Caco-2 (cell line): ENCODE measurements at regions of chr14 and their contacts with region 1.

Region 1: DNA sequence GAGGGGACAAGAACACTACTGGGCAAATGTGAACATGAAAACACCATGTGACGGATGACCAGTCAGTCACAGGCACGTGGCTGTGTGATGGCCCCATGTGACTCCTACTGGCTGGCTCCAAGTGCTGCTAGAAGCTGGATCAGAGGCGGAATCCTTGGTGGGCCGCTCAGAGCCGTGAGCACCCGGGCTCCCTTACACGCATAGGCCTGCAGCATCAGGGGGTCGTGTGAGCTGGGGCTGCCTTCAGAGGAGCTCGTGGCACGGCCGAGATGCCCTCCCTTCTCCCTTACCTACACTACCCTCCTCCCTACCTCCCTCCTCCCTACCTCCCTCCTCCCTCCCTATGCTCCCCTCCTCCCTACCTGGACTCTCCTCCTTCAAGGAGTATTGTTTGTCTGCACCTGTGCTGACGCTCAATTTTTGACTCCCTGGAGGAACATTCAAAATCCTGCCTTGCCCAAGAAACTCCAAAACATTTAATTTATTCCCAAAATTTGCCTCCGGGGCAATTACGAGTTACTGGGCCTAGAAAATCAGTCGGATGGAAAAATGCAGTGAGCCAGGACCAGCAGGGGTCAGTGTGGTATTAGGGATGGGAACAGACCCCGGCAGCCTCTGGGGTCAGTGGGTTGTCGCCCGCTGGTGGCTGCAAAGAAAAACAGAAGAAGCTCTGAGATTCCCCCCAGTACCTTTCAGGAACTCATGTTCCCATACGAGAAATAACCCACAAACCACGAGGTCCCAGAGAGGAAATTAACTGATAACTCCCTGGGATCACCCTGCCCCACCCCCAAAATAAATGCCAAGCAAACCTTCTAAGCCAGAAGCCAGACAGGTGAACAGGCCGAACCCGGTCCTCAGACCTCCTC is 61.2 kb downstream of the C14orf132 start:
- DNase-seq: peak; percentile 82 to 90
- H3K4me3 ChIP-seq: no peak overlapping the region
- H3K4me3 Mint-ChIP-seq: no peak overlapping the region
- H3K27ac Mint-ChIP-seq: no peak overlapping the region
- H3K4me1 ChIP-seq: peaks cover 43% of the 10 kb centered on the region
- H3K4me1 Mint-ChIP-seq: peaks cover 8% of the 10 kb centered on the region
- H3K27me3 ChIP-seq: no peaks in the 10 kb centered on the region
- H3K27me3 Mint-ChIP-seq: no peaks in the 10 kb centered on the region
- CTCF ChIP-seq: peak; percentile 95 to 96

Region 2: DNA sequence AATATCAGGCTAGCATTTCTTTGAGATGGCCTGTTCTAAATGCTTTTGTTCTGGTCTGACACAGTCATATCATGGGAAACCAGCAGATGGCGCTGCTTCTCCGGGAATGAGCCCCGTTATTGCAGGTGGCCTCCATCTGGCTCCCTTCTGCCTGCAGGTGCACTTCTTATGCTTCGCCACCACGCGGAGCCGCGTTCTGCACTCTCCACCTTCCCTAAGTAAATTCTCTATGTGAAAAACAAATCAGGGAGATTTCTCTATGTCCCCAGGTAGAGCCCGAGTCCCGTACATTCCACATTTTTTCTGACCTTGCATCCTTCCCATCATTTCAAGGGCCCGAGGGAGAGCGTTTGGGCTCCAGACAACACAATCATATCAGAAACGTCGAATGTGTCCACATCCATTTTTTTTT is 539.4 kb before region 1 on chr14:
- CTCF ChIA-PET with region 1: no interaction called
- POLR2A ChIA-PET with region 1: no interaction called
- intact Hi-C with region 1: loop called (anchors 1 kb)
- DNase-seq: peak; percentile 86 to 91
- H3K4me3 ChIP-seq: no peak overlapping the region
- H3K4me3 Mint-ChIP-seq: no peak overlapping the region
- H3K27ac Mint-ChIP-seq: no peak overlapping the region
- H3K4me1 ChIP-seq: no peaks in the 10 kb centered on the region
- H3K4me1 Mint-ChIP-seq: no peaks in the 10 kb centered on the region
- H3K27me3 ChIP-seq: no peaks in the 10 kb centered on the region
- H3K27me3 Mint-ChIP-seq: no peaks in the 10 kb centered on the region
- CTCF ChIP-seq: peak; percentile 95 to 97

Region 3: DNA sequence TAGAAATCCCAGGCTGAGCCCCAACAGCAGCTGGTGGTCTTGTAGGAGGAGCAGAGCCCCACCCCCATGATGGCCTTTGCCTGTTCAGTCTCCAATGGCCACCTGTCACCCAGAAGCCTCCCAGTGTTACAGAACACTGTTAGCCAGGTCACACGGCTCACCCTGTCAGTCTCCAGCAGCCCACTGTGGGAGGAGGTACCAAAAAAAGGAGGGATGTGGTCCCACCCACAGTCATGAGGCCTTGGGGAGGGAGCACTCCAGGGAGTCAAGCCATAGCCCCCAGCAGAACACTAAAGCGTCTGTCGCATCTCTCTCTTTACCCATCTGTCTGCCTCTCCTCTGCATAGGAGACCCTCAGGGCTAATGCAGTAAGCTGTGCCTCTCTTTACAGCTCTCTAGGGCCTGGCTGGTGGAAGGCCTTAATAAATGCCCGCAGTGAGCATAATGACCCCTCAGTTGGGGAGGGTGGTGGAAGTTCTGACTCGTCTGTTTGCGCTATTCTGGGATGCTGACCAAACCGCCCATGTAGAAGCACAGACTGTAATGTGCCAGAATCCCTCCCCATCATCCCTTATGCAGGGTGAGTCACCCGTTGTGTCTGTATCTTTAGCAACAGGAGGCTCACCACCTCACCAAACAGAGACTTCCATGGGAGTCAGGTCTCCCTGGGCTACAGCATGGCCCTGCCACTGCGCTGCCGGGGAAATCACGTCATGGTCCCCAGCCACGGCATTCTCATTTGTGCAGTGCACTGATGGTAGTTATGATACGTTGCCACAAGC is 46.6 kb before region 1 on chr14:
- CTCF ChIA-PET with region 1: interaction called, 26 read pairs
- POLR2A ChIA-PET with region 1: no interaction called
- intact Hi-C with region 1: loop called (anchors 1 kb)
- DNase-seq: no peak
- H3K4me3 ChIP-seq: no peak overlapping the region
- H3K4me3 Mint-ChIP-seq: no peak overlapping the region
- H3K27ac Mint-ChIP-seq: no peak overlapping the region
- H3K4me1 ChIP-seq: no peaks in the 10 kb centered on the region
- H3K4me1 Mint-ChIP-seq: no peaks in the 10 kb centered on the region
- H3K27me3 ChIP-seq: no peaks in the 10 kb centered on the region
- H3K27me3 Mint-ChIP-seq: peaks cover 10% of the 10 kb centered on the region
- CTCF ChIP-seq: no peak

Region 4: GRCh38 chr14:96204151-96205058 is 104.0 kb after region 1 on chr14 and contains the start of gene BDKRB2:
- CTCF ChIA-PET with region 1: interaction called, 8 read pairs
- POLR2A ChIA-PET with region 1: interaction called, 5 read pairs
- intact Hi-C with region 1: loop called (anchors 2 kb)
- DNase-seq: peak; percentile 70 to 73
- H3K4me3 ChIP-seq: peak within 1 kb of the TSS; percentile 35
- H3K4me3 Mint-ChIP-seq: peak within 1 kb of the TSS; percentile 70
- H3K27ac Mint-ChIP-seq: peak within 1 kb of the TSS; percentile 72
- H3K4me1 ChIP-seq: peaks cover 14% of the 10 kb centered on the region
- H3K4me1 Mint-ChIP-seq: no peaks in the 10 kb centered on the region
- H3K27me3 ChIP-seq: no peaks in the 10 kb centered on the region
- H3K27me3 Mint-ChIP-seq: no peaks in the 10 kb centered on the region
- CTCF ChIP-seq: no peak
- total RNA-seq, gene BDKRB2: 1.4 and 2.0 TPM in 2 replicates

Region 5: DNA sequence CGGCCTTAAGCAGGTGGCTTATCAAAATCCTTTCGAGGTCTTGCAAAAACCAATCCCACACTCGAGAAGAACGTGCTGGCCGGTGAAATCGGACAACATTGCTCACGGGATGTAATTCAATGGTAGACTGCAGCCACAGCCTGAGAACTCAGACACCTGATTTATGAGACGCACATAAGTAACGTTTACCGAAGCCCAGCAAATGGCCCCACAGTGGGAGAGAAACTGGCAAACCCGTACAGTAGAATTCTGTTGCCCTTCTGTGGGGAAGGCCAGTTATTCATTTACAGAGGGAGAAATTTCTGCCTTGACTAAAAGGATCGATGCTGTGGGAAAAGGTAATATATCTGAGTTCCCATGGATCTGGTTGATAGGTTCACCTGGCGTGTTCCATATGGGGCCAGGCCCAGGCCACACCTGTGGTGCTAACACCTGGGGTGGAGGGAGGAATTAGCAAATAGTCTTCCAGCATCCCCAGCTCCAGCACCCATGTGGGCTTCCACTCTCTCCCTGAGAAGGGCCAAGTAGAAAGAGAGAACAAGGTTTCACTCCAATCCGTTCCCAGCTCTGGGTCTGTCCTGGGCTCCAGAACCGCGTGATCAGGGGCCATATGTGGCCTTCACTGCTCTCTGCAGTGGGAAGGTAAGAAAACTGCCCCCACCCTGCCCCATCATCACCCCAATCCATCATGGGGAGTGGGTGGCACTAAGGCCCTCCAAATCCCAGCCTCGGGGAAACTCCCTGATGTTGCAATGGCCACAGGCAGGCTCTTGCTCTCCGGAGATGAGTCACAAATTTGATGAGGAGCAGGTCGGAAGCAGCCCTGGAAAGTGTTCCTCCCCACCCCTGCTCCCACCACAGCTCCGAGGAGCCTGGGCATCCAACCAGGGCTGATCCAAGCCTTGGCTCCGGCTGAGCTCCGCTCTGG is 168.3 kb after region 1 on chr14:
- CTCF ChIA-PET with region 1: interaction called, 60 read pairs
- POLR2A ChIA-PET with region 1: no interaction called
- intact Hi-C with region 1: loop called (anchors 1 kb)
- DNase-seq: no peak
- H3K4me3 ChIP-seq: no peak overlapping the region
- H3K4me3 Mint-ChIP-seq: no peak overlapping the region
- H3K27ac Mint-ChIP-seq: no peak overlapping the region
- H3K4me1 ChIP-seq: 0 out of 2 replicates have a peak, but pooled peaks cover 7% of the 10 kb centered on the region
- H3K4me1 Mint-ChIP-seq: peaks cover 10% of the 10 kb centered on the region
- H3K27me3 ChIP-seq: no peaks in the 10 kb centered on the region
- H3K27me3 Mint-ChIP-seq: no peaks in the 10 kb centered on the region
- CTCF ChIP-seq: no peak

Region 6: GRCh38 chr14:96424109-96424989 is 324.0 kb after region 1 on chr14:
- CTCF ChIA-PET with region 1: no interaction called
- POLR2A ChIA-PET with region 1: no interaction called
- intact Hi-C with region 1: loop called (anchors 1 kb)
- DNase-seq: peak in 1 of 2 experiments; percentile 70
- H3K4me3 ChIP-seq: peak overlapping the region; percentile 38
- H3K4me3 Mint-ChIP-seq: peak overlapping the region; percentile 69
- H3K27ac Mint-ChIP-seq: no peak overlapping the region
- H3K4me1 ChIP-seq: no peaks in the 10 kb centered on the region
- H3K4me1 Mint-ChIP-seq: no peaks in the 10 kb centered on the region
- H3K27me3 ChIP-seq: no peaks in the 10 kb centered on the region
- H3K27me3 Mint-ChIP-seq: no peaks in the 10 kb centered on the region
- CTCF ChIP-seq: peak; percentile 54 to 62